B cell (primary cell): ENCODE measurements at regions of chr5 and their contacts with region 1.

Region 1: DNA sequence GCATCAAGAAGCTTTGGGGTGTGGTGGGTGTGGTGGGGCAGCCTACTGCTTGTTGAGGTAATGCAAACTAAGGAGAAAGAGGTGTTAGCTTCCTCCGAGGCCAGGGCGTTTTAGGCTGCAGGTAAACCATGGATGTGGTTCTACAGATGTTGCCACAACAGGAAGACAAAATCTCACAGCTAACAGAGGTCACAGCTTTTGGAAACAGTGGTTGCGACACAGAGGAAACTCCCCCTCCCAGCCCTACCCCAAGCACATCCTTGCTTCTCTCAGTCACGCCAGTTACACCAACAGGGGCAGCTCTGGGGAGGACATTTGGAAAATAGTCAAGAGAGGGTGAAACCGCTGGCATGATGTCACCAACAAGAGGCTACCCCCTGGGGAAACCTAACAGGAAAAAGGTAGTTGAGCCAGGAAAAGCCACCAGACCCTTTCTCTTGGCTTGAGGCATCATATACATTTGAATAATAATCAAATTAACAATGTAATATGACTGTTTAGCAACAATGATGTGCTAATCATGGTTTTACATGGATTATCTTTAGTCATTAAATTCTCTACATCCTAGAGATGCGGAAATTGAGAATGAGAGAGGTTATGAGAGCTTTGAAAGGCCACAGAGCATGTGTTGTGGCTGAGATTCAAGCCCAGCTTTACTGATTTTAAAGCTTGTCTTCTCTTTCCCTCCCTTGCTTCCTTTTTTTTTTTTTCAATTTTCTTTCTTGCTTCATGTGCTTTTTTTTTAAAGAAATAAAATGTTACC is 82.2 kb upstream of the IL12B start:
- DNase-seq: peak; percentile 56
- ATAC-seq: peak; percentile 71
- H3K4me3 ChIP-seq: no peak overlapping the region
- H3K4me3 Mint-ChIP-seq: no peak overlapping the region
- H3K27ac ChIP-seq: peak overlapping the region; percentile 51 to 54
- H3K27ac Mint-ChIP-seq: peak overlapping the region; percentile 79
- H3K4me1 ChIP-seq: peaks cover 11 to 28% of the 10 kb centered on the region in 2 donors
- H3K4me1 Mint-ChIP-seq: peaks cover 27% of the 10 kb centered on the region
- H3K27me3 ChIP-seq: no peaks in the 10 kb centered on the region
- H3K27me3 Mint-ChIP-seq: no peaks in the 10 kb centered on the region
- CTCF ChIP-seq: no peak

Region 2: DNA sequence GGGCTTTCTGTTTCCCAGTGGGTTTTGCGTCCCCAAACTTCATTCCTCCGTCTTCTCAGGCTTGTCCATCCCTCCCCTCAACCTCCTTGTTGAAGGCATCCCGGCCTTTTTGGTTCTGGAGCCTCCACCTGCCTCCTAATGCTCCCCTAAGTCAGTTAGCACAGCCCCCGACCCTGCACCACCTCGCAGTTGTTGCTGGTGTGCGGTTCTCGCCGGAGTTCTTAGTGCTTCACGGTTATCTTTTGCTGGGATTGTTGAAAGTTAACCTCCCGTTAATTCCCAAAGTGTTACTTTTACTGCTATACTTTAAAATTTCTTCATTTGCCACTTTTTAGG is 148.9 kb before region 1 on chr5:
- CTCF ChIA-PET with region 1: no interaction called
- POLR2A ChIA-PET with region 1: no interaction called
- intact Hi-C with region 1: no loop called
- DNase-seq: no peak
- ATAC-seq: no peak
- H3K4me3 ChIP-seq: peak overlapping the region; percentile 84 to 96 (median 95)
- H3K4me3 Mint-ChIP-seq: peak overlapping the region; percentile 96
- H3K27ac ChIP-seq: peak overlapping the region; percentile 87 to 88
- H3K27ac Mint-ChIP-seq: peak overlapping the region; percentile 97
- H3K4me1 ChIP-seq: peaks cover 17 to 18% of the 10 kb centered on the region in 2 donors
- H3K4me1 Mint-ChIP-seq: peaks cover 34% of the 10 kb centered on the region
- H3K27me3 ChIP-seq: no peaks in the 10 kb centered on the region
- H3K27me3 Mint-ChIP-seq: no peaks in the 10 kb centered on the region
- CTCF ChIP-seq: no peak

Region 3: GRCh38 chr5:159336991-159337955 is 75.2 kb before region 1 on chr5:
- CTCF ChIA-PET with region 1: interaction called, 9 read pairs
- POLR2A ChIA-PET with region 1: no interaction called
- intact Hi-C with region 1: loop called (anchors 1 kb)
- DNase-seq: peak; percentile 53
- ATAC-seq: peak; percentile 18
- H3K4me3 ChIP-seq: no peak overlapping the region
- H3K4me3 Mint-ChIP-seq: peak overlapping the region; percentile 60
- H3K27ac ChIP-seq: peak overlapping the region; percentile 55 to 82
- H3K27ac Mint-ChIP-seq: peak overlapping the region; percentile 93
- H3K4me1 ChIP-seq: peaks cover 38 to 60% of the 10 kb centered on the region in 2 donors
- H3K4me1 Mint-ChIP-seq: peaks cover 68% of the 10 kb centered on the region
- H3K27me3 ChIP-seq: no peaks in the 10 kb centered on the region
- H3K27me3 Mint-ChIP-seq: no peaks in the 10 kb centered on the region
- CTCF ChIP-seq: no peak

Region 4: GRCh38 chr5:159902444-159903121 is 490.1 kb after region 1 on chr5:
- CTCF ChIA-PET with region 1: no interaction called
- POLR2A ChIA-PET with region 1: no interaction called
- intact Hi-C with region 1: no loop called
- DNase-seq: no peak
- ATAC-seq: no peak
- H3K4me3 ChIP-seq: no peak overlapping the region
- H3K4me3 Mint-ChIP-seq: no peak overlapping the region
- H3K27ac ChIP-seq: no peak overlapping the region
- H3K27ac Mint-ChIP-seq: no peak overlapping the region
- H3K4me1 ChIP-seq: no peaks in the 10 kb centered on the region
- H3K4me1 Mint-ChIP-seq: no peaks in the 10 kb centered on the region
- H3K27me3 ChIP-seq: peaks cover 0 to 19% (median 3%) of the 10 kb centered on the region in 4 experiments
- H3K27me3 Mint-ChIP-seq: peaks cover 43% of the 10 kb centered on the region
- CTCF ChIP-seq: no peak